Left ventricle myocardium superior (tissue), 1 donor: ENCODE measurements at regions of chr5 and their contacts with region 1.

Region 1: DNA sequence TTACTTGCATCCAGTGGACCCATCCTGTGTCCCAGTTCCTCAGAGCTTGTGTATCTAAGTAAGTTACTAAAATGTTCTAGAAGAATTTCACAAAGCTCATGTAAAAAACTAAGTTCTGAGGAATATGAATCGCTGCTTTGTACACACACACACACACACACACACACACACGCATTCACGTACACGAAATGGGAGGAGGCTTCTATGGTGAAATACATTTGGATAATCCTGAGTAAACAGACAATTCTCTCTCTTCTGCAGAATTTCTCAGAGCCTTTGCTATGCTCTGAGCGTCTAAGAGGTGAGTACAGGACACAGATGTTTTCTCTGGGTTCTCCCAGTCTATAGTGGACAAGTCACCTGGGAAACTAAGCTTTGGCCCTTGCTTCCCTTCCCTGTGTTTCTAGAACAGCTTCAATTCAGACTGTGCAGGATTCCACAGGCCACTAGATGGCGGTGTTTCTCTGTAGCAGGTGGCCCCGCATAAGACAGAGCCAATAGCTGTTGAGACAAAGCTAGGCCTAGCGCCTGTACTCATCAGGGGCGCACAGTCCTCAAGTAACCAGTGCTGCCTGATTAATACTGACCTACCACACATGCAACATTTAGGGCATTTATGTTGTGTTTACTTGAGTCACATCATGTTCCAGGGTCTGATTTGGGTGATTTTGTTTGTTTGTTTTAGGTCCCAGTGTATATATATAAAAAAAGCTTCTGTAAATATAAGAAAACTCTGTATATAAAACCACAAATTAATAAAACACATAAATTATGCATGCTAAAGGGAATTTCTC is 114.8 kb downstream of the LIFR start:
- DNase-seq: peak; percentile 86
- ATAC-seq: peak; percentile 97

Region 2: GRCh38 chr5:38556599-38557305 is 115.1 kb after region 1 on chr5 and contains the start of gene LIFR:
- intact Hi-C with region 1: loop called (anchors 10 kb)
- DNase-seq: peak; percentile 93
- ATAC-seq: peak; percentile 87
- total RNA-seq, gene LIFR: 61.1 TPM

Region 3: GRCh38 chr5:38666668-38667498 is 225.2 kb after region 1 on chr5:
- intact Hi-C with region 1: loop called (anchors 2 kb)
- DNase-seq: peak; percentile 44
- ATAC-seq: peak; percentile 94

Region 4: DNA sequence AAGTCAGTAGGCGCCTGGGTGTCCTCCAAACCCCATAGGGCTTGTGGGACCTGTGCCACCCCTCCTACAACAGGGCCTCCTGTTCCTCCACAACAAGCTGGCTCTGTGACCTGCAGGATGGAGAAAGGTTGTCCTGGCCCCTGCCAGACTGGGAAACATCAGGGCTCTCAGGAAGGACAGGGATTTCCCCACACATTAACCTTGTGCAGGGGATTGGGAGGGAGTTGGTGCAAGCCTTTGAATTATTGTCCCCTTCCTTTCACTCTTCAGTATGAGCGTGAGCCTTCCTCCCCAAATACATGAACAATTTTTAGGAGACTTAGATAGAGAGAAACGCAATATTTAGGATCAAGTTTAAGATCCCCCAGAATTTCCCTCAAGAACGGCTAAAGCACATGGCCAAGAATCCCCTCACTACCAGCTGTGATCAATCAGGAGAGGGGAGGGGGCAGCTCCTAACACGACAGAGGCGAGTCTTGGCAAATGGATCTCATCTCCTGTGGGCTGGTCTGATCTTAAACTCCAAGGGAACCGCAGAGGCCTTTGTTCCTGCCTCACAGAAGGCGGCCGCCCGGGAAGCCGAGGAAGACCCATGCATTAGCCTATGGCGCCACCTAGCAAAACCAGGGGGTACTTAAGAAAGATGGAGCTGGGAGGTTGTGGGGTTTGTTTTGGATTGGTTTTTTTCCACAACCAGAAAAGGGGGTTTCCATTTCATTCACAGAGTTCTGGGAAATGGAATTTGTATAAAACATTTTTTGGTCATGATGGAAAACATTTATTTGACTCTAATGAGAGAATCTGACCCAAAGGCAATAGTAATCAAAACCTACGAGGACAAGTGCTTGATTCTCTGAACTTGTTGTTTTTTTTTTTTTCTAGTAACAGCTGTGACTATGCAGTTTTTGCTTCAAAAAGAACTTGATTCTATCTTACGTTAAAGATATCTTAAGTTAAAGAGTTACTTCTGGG is 368.0 kb after region 1 on chr5:
- intact Hi-C with region 1: loop called (anchors 5 kb)
- DNase-seq: peak; percentile 86
- ATAC-seq: peak; percentile 94